ENCODE measurements at regions of chr1 and their contacts with region 1.

Region 1: GRCh38 chr1:32072622-32073298 is at the start of gene TMEM39B:
- DNase-seq: peak; percentile 95 to 99 (median 98)
- H3K4me3 ChIP-seq: peak within 1 kb of the TSS; percentile 69 to 90 (median 83)
- H3K27ac ChIP-seq: peak within 1 kb of the TSS in 1 of 2 experiments; percentile 78
- H3K4me1 ChIP-seq: peaks cover 6 to 29% (median 19%) of the 10 kb centered on the region in 4 experiments
- H3K27me3 ChIP-seq: no peaks in the 10 kb centered on the region

Region 2: GRCh38 chr1:32094746-32095521 is 22.2 kb after region 1 on chr1:
- CTCF ChIA-PET with region 1: interaction called, 12 read pairs
- POLR2A ChIA-PET with region 1: no interaction called
- DNase-seq: no peak
- H3K4me3 ChIP-seq: no peak overlapping the region
- H3K27ac ChIP-seq: no peak overlapping the region
- H3K4me1 ChIP-seq: no peaks in the 10 kb centered on the region
- H3K27me3 ChIP-seq: no peaks in the 10 kb centered on the region

Region 3: DNA sequence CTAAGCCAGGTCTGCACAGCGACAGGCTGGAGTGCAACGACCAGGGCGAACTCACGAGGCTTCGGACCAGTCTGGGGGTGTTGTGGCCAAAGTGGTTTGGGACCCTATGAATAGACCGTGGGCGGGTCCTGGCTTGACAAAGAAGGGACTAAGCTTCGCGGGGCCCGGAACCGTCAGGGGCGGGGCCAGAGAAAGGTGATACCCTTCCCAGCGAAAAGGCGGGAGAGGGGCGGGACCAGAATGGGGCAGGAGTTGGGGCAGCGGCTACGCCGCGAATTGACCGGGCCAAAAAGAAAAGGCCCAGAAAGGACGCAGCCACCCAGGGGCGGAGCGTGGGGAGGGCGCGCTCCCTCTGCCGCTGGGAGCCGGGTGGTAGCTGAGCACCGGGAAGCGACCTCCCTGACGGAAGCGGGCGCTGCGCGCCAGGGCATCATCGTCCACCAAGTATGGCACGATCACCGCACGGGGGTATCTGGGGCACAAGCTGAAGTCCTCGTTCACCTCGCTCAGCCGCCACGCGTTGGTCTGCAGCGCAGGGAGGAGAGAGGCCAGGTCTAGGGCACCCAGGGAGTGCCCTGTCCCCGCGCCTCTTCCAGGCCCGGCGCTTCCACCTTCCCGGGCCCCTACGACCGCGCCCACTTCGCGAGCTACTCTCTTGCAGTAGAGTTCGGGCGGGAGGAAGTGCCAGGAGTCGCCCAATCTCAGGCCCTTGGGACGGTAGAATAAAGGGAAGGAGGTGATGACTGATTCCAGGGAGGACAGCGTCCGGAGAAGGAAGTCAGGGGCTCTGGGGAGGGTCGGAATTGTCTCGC is 167.6 kb after region 1 on chr1:
- CTCF ChIA-PET with region 1: no interaction called
- POLR2A ChIA-PET with region 1: no interaction called
- DNase-seq: peak; percentile 49 to 62 (median 54)
- H3K4me3 ChIP-seq: peak overlapping the region; percentile 29 to 79 (median 65)
- H3K27ac ChIP-seq: no peak overlapping the region
- H3K4me1 ChIP-seq: peaks cover 0 to 25% (median 18%) of the 10 kb centered on the region in 4 experiments
- H3K27me3 ChIP-seq: peaks cover 0 to 5% (median 0%) of the 10 kb centered on the region in 5 experiments

Measured in common myeloid progenitor, CD34-positive (primary cell).